Esophagus muscularis mucosa (tissue), 4 donors: ENCODE measurements at regions of chr19 and their contacts with region 1.

Region 1: GRCh38 chr19:48391107-48391986 is at the start of gene KDELR1:
- DNase-seq: no peak
- H3K4me3 ChIP-seq: peak within 1 kb of the TSS; percentile 70 to 99 (median 90)
- H3K27ac ChIP-seq: peak within 1 kb of the TSS; percentile 90 to 93 (median 92)
- H3K4me1 ChIP-seq: peaks cover 20 to 51% (median 39%) of the 10 kb centered on the region in 4 donors
- H3K27me3 ChIP-seq: peaks cover 7 to 46% (median 37%) of the 10 kb centered on the region in 4 donors
- CTCF ChIP-seq: peak; percentile 84 to 94 (median 91)
- EP300 ChIP-seq: no peak
- POLR2A ChIP-seq: no peak
- total RNA-seq, gene KDELR1: 55.2 to 105 (median 77.6) TPM

Region 2: DNA sequence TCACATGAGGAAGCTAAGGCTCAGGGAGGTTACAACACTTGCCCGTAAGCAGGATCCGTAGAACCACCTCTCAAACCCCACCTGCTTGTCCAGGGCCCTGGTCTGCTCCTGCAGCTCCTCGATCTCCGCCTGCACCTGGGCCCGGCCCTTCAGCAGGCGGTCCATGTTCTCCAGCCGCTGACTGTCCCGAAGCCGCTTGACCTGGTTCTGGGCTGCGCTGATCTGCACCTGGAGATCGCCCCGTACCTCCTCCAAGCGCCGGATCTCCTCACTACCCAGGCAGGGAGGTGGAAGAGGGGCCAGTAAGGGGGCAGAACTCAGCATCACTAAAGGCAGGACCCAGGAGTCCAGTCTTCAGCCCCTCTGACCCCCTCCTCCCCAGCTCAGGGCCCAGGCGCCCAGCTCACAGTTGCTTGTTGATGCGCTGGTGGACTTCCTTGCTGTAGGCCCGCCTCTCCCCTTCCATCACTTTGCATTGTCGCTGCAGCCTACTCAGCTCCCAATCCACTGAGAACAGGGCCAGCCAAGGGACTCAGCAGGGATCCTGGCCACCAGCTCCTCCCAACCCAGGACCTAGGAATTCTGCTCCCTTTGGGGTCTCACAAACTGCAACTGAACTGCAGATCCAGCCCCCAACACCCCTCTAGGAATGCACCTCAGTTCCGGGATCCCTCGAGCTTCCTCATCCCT is 72.9 kb before region 1 on chr19:
- intact Hi-C with region 1: loop called (anchors 2 kb)
- DNase-seq: no peak
- H3K4me3 ChIP-seq: no peak overlapping the region
- H3K27ac ChIP-seq: no peak overlapping the region
- H3K4me1 ChIP-seq: peaks cover 22 to 34% (median 32%) of the 10 kb centered on the region in 4 donors
- H3K27me3 ChIP-seq: no peaks in the 10 kb centered on the region
- CTCF ChIP-seq: no peak
- EP300 ChIP-seq: no peak
- POLR2A ChIP-seq: no peak